ENCODE measurements at regions of chr17 and their contacts with region 1.

Region 1: DNA sequence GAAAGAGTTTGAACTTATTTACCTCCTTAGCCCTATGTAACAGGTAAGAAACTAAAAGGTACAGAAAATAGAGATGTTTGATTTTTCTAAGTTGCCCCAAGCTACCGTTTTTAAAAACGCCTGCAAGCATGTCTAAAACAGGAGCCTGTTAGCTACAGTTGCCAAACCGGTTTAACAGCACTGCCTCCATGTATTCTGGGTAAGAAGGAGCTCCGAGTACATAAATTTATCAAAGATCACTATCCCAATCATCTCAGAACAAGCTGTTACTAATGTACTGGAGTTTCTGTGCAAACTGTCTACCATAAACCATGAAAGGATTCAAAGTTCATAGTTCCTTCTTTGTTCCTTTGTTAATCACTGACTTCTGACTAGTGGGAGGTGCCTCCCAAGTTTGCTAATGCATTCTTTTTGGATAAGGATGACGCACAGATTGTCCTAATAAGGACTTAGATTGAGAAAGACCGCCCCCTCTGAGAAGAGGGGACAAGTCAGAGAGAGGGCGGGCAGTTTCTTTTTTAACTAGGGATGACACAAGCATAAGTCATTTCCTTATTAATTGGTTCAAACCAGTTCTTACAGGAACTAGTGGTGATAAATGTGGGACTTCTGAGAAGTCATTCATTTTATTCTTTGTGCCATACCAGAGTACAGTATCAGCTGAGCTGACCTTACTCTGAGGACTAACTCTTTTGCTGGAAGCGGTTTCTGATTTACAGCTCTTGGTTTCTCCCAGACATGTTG is 55.3 kb downstream of the TUBD1 start:
- DNase-seq: peak; percentile 81 to 100
- ATAC-seq: peak; percentile 74 to 82
- H3K4me3 ChIP-seq: peak overlapping the region; percentile 57
- H3K27ac ChIP-seq: peak overlapping the region; percentile 94 to 96
- H3K4me1 ChIP-seq: peaks cover 30% of the 10 kb centered on the region
- CTCF ChIP-seq: no peak
- EP300 ChIP-seq: peak; percentile 100
- POLR2A ChIP-seq: no peak; the same call in 1 of the 2 replicates
- RAD21 ChIP-seq: peak; percentile 10 to 59; a peak in 3 of 5 replicates

Region 2: GRCh38 chr17:59753522-59754467 is 83.7 kb before region 1 on chr17:
- CTCF ChIA-PET with region 1: interaction called, 244 read pairs
- POLR2A ChIA-PET with region 1: interaction called, 531 read pairs
- DNase-seq: peak; percentile 81 to 94
- ATAC-seq: peak; percentile 49 to 65
- H3K4me3 ChIP-seq: no peak overlapping the region
- H3K27ac ChIP-seq: peak overlapping the region; percentile 95
- H3K4me1 ChIP-seq: peaks cover 92% of the 10 kb centered on the region
- CTCF ChIP-seq: peak; percentile 98
- EP300 ChIP-seq: no peak
- POLR2A ChIP-seq: no peak
- RAD21 ChIP-seq: peak; percentile 97 to 98

Region 3: GRCh38 chr17:59769891-59770290 is 67.6 kb before region 1 on chr17:
- CTCF ChIA-PET with region 1: no interaction called
- POLR2A ChIA-PET with region 1: interaction called, 11 read pairs
- DNase-seq: no peak
- ATAC-seq: no peak
- H3K4me3 ChIP-seq: no peak overlapping the region
- H3K27ac ChIP-seq: peak overlapping the region; percentile 71 to 76; a peak in 4 of 6 replicates
- H3K4me1 ChIP-seq: peaks cover 53% of the 10 kb centered on the region
- CTCF ChIP-seq: no peak
- EP300 ChIP-seq: no peak
- POLR2A ChIP-seq: no peak
- RAD21 ChIP-seq: no peak

Region 4: DNA sequence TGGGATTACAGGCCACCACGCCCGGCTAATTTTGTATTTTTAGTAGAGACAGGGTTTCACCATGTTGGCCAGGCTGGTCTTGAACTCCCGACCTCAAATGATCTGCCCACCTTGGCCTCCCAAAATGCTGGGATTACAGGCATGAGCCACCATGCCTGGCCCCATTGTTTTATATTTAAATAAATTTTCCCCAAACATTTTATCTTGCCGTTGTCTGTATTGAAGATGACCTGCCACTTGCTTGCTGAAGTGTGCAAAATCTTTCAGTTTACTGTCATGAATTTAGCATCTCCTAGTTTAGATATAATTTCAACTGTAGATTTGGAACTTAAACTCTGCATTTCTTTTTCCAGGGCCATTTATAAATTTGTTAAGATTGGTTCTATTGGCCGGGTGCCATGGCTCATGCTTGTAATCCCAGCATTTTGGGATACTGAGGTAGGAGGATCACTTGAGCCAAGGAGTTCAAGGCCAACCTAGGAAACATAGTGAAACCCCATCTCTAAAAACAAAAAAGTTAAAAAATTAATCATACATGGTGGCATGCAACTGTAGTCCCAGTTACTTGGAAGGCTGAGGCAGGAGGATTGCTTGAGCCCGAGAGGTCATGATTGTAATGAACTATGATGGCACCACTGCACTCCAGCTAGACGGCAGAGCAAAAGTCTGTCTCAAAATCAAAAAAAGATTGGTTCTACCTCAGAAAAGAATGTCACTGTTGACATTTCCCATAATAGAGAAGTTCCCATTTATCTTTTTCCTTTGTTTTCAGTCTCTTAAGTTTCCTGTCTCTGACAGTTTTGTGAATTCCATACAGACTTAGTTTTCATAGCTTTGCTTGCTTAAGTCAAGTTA is 45.6 kb before region 1 on chr17:
- CTCF ChIA-PET with region 1: interaction called, 5 read pairs
- POLR2A ChIA-PET with region 1: interaction called, 610 read pairs
- DNase-seq: peak in 1 of 2 experiments; percentile 95
- ATAC-seq: peak; percentile 62 to 86; a peak in 4 of 6 replicates
- H3K4me3 ChIP-seq: no peak overlapping the region
- H3K27ac ChIP-seq: peak overlapping the region; percentile 94 to 98
- H3K4me1 ChIP-seq: peaks cover 67% of the 10 kb centered on the region
- CTCF ChIP-seq: no peak
- EP300 ChIP-seq: peak; percentile 83 to 89; a peak in 4 of 5 replicates
- POLR2A ChIP-seq: no peak
- RAD21 ChIP-seq: 0 out of 5 replicates have a peak, but pooled peaks have one; percentile 26 to 29

Region 5: GRCh38 chr17:59810894-59811153 is 26.7 kb before region 1 on chr17:
- CTCF ChIA-PET with region 1: interaction called, 4 read pairs
- POLR2A ChIA-PET with region 1: interaction called, 13 read pairs
- DNase-seq: no peak
- ATAC-seq: no peak
- H3K4me3 ChIP-seq: no peak overlapping the region
- H3K27ac ChIP-seq: peak overlapping the region; percentile 80 to 87
- H3K4me1 ChIP-seq: peaks cover 82% of the 10 kb centered on the region
- CTCF ChIP-seq: no peak
- EP300 ChIP-seq: no peak
- POLR2A ChIP-seq: no peak
- RAD21 ChIP-seq: no peak

Region 6: GRCh38 chr17:59876107-59876506 is 38.6 kb after region 1 on chr17:
- CTCF ChIA-PET with region 1: no interaction called
- POLR2A ChIA-PET with region 1: no interaction called
- DNase-seq: no peak
- ATAC-seq: no peak
- H3K4me3 ChIP-seq: no peak overlapping the region
- H3K27ac ChIP-seq: no peak overlapping the region
- H3K4me1 ChIP-seq: peaks cover 5% of the 10 kb centered on the region; the same call in 2 of the 3 replicates
- CTCF ChIP-seq: no peak
- EP300 ChIP-seq: no peak
- POLR2A ChIP-seq: no peak
- RAD21 ChIP-seq: no peak

Region 7: GRCh38 chr17:59892924-59893676 is 55.6 kb after region 1 on chr17 and contains the starts of genes RPS6KB1 and TUBD1:
- CTCF ChIA-PET with region 1: no interaction called
- POLR2A ChIA-PET with region 1: no interaction called
- DNase-seq: peak; percentile 99 to 100
- ATAC-seq: peak; percentile 96 to 97
- H3K4me3 ChIP-seq: peak within 1 kb of the TSS; percentile 81
- H3K27ac ChIP-seq: peak within 1 kb of the TSS; percentile 93
- H3K4me1 ChIP-seq: peaks cover 39% of the 10 kb centered on the region
- CTCF ChIP-seq: no peak
- EP300 ChIP-seq: no peak
- POLR2A ChIP-seq: peak; percentile 97
- RAD21 ChIP-seq: no peak
- polyA plus RNA-seq, gene RPS6KB1: 53.7 and 57.3 TPM in 2 replicates
- polyA plus RNA-seq, gene TUBD1: 24.4 and 28.3 TPM in 2 replicates

Region 8: GRCh38 chr17:60392042-60392844 is 554.8 kb after region 1 on chr17 and contains the start of gene USP32:
- CTCF ChIA-PET with region 1: no interaction called
- POLR2A ChIA-PET with region 1: no interaction called
- DNase-seq: peak; percentile 96 to 99
- ATAC-seq: peak; percentile 92 to 94
- H3K4me3 ChIP-seq: peak within 1 kb of the TSS; percentile 91
- H3K27ac ChIP-seq: peak within 1 kb of the TSS; percentile 96
- H3K4me1 ChIP-seq: peaks cover 24% of the 10 kb centered on the region
- CTCF ChIP-seq: no peak
- EP300 ChIP-seq: peak in 1 of 2 experiments; percentile 31; a peak in 1 of 5 replicates
- POLR2A ChIP-seq: peak; percentile 76
- RAD21 ChIP-seq: no peak; a peak in 1 of 5 replicates
- polyA plus RNA-seq, gene USP32: 52.2 and 70.6 TPM in 2 replicates